ENCODE measurements at regions of chr10 and their contacts with region 1.

Region 1: DNA sequence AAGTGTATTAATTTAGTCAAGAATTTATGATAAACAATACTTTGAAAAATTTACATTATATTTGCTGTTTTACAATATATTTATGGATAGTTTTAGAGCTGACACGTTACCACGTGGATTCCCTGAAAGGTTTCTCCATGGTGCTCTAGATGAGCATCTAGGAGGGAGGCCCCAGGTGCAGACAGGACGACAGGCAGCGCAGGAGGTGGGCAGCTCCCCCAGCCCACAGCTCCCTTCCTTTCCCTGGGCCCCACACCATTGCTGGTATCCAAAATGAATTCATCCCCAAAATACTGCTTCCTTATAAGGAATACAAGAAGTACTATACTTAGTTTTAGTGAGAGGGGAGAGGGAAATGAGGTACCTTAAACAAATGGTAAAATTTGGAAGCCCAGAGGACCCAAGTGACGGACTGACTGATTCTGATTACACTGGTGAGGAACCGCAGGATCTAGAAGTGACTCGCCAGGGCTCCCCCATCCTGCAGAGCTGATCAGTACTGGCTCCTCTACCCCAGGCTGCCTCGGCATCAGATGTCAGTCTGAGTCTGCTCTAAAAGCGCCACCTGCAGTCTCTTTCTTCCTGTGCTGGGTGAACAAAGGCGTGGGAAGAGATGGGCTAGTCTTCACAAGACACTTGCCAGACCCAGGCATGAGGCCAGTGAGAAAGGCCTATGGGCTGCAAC is 89.2 kb downstream of the DLG5 start:
- DNase-seq: peak; percentile 89
- H3K4me3 Mint-ChIP-seq: no peak overlapping the region
- H3K27ac Mint-ChIP-seq: peak overlapping the region; percentile 23
- H3K4me1 Mint-ChIP-seq: peaks cover 16% of the 10 kb centered on the region
- H3K27me3 Mint-ChIP-seq: no peaks in the 10 kb centered on the region

Region 2: DNA sequence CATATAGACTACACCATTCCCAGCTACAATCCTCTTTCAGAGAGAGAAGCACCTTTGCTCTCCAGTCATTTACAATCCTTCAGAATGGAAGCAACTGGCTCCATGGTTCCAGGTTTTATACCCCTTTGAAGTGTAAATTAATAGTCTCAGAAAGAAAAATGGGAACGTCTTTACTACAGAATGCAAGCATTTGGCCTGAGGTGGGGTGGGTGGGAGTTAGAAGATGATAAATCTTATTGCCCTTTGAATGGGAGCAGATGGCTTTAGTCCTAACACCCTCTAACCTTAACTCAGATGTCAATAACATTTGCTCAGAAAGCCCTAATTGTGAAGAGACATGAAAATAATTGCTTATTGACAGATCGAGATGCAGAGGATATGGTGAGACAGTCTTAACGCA is 115.6 kb before region 1 on chr10:
- CTCF ChIA-PET with region 1: interaction called, 76 read pairs
- POLR2A ChIA-PET with region 1: no interaction called
- intact Hi-C with region 1: loop called (anchors 1 kb)
- DNase-seq: no peak
- H3K4me3 Mint-ChIP-seq: no peak overlapping the region
- H3K27ac Mint-ChIP-seq: no peak overlapping the region
- H3K4me1 Mint-ChIP-seq: peaks cover 4% of the 10 kb centered on the region
- H3K27me3 Mint-ChIP-seq: peaks cover 4% of the 10 kb centered on the region

Region 3: GRCh38 chr10:77801474-77802161 is 35.8 kb before region 1 on chr10:
- CTCF ChIA-PET with region 1: no interaction called
- POLR2A ChIA-PET with region 1: no interaction called
- intact Hi-C with region 1: loop called (anchors 1 kb)
- DNase-seq: peak; percentile 79
- H3K4me3 Mint-ChIP-seq: no peak overlapping the region
- H3K27ac Mint-ChIP-seq: peak overlapping the region; percentile 46
- H3K4me1 Mint-ChIP-seq: peaks cover 18% of the 10 kb centered on the region
- H3K27me3 Mint-ChIP-seq: no peaks in the 10 kb centered on the region

Region 4: GRCh38 chr10:77873536-77874380 is 36.4 kb after region 1 on chr10:
- CTCF ChIA-PET with region 1: interaction called, 10 read pairs
- POLR2A ChIA-PET with region 1: no interaction called
- intact Hi-C with region 1: no loop called
- DNase-seq: peak; percentile 80
- H3K4me3 Mint-ChIP-seq: no peak overlapping the region
- H3K27ac Mint-ChIP-seq: peak overlapping the region; percentile 69
- H3K4me1 Mint-ChIP-seq: peaks cover 10% of the 10 kb centered on the region
- H3K27me3 Mint-ChIP-seq: no peaks in the 10 kb centered on the region

Region 5: DNA sequence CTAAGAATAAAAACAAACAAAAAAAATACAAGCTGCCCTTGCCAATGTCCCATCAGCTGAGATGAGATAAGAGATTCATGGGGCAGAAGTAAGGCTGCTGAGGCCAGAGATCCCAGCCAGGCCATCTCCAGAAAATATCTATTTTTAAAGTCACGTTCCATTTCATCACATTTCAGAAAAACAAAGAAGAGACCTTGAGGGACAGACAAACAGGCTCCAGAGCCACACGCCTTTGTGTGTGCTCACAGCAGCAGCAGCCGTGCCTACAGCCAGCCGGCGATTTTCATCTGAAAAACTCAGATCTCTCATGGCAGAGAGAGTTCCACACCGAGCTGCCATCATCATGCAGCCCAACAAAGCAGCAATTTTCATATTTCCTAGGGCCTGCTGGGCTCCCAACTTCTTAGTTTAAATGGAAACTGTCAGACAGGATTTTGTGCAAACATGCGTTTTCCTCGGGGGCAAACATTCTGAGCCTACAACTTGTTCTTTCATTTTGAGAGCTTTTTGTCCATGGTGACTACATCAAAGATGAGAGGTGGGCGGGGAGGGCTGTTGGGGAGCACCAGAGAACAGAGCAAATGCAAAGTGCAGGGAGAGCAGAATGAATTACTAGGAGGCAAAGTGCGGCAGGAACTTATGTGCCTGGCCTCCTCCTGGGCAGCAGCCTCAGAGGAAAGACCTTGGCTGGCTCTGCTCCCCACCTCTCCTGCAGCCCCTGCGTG is 50.4 kb after region 1 on chr10:
- CTCF ChIA-PET with region 1: no interaction called
- POLR2A ChIA-PET with region 1: no interaction called
- intact Hi-C with region 1: no loop called
- DNase-seq: peak; percentile 10
- H3K4me3 Mint-ChIP-seq: no peak overlapping the region
- H3K27ac Mint-ChIP-seq: no peak overlapping the region
- H3K4me1 Mint-ChIP-seq: peaks cover 4% of the 10 kb centered on the region
- H3K27me3 Mint-ChIP-seq: no peaks in the 10 kb centered on the region

Region 6: DNA sequence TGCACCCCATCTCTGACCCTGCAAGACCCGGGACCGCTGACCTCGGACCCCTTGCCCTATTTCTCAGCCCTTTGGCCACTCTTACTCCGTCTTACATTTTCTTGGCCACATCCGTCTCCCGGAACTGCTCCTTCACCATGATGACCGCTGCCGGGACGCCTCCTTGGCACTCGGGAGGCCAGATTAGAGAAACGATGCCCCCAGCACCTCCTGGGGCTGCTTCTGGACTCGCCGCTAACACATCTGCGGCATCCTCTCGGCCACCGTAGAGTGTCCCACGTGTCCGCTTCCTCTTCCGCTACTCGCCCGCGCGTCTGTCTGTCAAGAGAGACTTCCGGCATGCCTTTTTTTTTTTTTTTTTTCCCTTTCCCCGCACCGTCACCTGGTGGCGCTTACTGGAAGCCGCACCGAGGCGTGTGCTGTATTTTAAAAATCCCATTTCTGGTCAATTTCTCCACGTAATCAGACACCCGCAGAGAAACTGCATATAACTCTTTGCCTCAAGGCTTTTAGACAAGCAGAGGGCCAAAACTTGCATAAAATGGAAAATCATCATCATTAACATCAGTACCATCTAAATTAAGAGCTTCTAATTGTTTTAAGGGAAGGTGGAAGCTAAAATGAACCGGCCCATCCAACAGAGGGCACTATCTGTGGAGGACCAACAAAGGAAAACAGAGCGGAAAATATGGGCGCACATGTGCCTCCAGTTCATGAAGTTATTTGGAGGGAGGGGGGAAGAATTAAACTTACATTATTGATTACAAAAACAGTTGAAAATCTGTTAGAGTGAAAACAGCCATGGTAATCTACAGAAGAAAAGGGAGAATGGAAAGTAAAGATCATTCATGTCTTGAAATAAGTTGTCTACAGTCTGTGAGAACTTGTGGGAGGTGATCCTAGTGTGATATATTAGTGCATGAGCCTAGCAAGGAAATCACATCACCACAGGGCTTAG is 192.2 kb after region 1 on chr10 and contains the start of gene POLR3A:
- CTCF ChIA-PET with region 1: no interaction called
- POLR2A ChIA-PET with region 1: no interaction called
- intact Hi-C with region 1: loop called (anchors 1 kb)
- DNase-seq: peak; percentile 94
- H3K4me3 Mint-ChIP-seq: peak within 1 kb of the TSS; percentile 99
- H3K27ac Mint-ChIP-seq: peak within 1 kb of the TSS; percentile 93
- H3K4me1 Mint-ChIP-seq: peaks cover 33% of the 10 kb centered on the region
- H3K27me3 Mint-ChIP-seq: no peaks in the 10 kb centered on the region
- total RNA-seq, gene POLR3A: 16.6 to 17.0 TPM